Activated B cell treated with CpG ODN at 0.5 μM for 24 hours (primary cell): ENCODE measurements at regions of chr16 and their contacts with region 1.

Region 1: GRCh38 chr16:67399181-67399733 is 6.0 kb upstream of the TPPP3 start:
- DNase-seq: peak; percentile 55
- ATAC-seq: peak; percentile 82
- H3K4me3 Mint-ChIP-seq: no peak overlapping the region
- H3K27ac Mint-ChIP-seq: no peak overlapping the region
- H3K4me1 Mint-ChIP-seq: peaks cover 1% of the 10 kb centered on the region
- H3K27me3 Mint-ChIP-seq: peaks cover 9% of the 10 kb centered on the region
- CTCF ChIP-seq: peak; percentile 40

Region 2: GRCh38 chr16:67260426-67261075 is 138.7 kb before region 1 on chr16:
- CTCF ChIA-PET with region 1: interaction called, 8 read pairs
- POLR2A ChIA-PET with region 1: no interaction called
- intact Hi-C with region 1: loop called (anchors 1 kb)
- DNase-seq: no peak
- ATAC-seq: peak; percentile 45
- H3K4me3 Mint-ChIP-seq: no peak overlapping the region
- H3K27ac Mint-ChIP-seq: no peak overlapping the region
- H3K4me1 Mint-ChIP-seq: no peaks in the 10 kb centered on the region
- H3K27me3 Mint-ChIP-seq: peaks cover 5% of the 10 kb centered on the region
- CTCF ChIP-seq: no peak

Region 3: GRCh38 chr16:67279296-67280089 is 119.8 kb before region 1 on chr16 and contains the start of gene PLEKHG4:
- CTCF ChIA-PET with region 1: interaction called, 4 read pairs
- POLR2A ChIA-PET with region 1: no interaction called
- intact Hi-C with region 1: loop called (anchors 1 kb)
- DNase-seq: peak; percentile 73
- ATAC-seq: peak; percentile 97
- H3K4me3 Mint-ChIP-seq: peak within 1 kb of the TSS; percentile 79
- H3K27ac Mint-ChIP-seq: no peak within 1 kb of the TSS
- H3K4me1 Mint-ChIP-seq: peaks cover 3% of the 10 kb centered on the region
- H3K27me3 Mint-ChIP-seq: no peaks in the 10 kb centered on the region
- CTCF ChIP-seq: peak; percentile 41
- total RNA-seq, gene PLEKHG4: 7.8 TPM in 2 replicates

Region 4: GRCh38 chr16:67294938-67295361 is 104.3 kb before region 1 on chr16:
- CTCF ChIA-PET with region 1: no interaction called
- POLR2A ChIA-PET with region 1: no interaction called
- intact Hi-C with region 1: no loop called
- DNase-seq: no peak
- ATAC-seq: no peak
- H3K4me3 Mint-ChIP-seq: no peak overlapping the region
- H3K27ac Mint-ChIP-seq: no peak overlapping the region
- H3K4me1 Mint-ChIP-seq: no peaks in the 10 kb centered on the region
- H3K27me3 Mint-ChIP-seq: peaks cover 4% of the 10 kb centered on the region
- CTCF ChIP-seq: no peak

Region 5: DNA sequence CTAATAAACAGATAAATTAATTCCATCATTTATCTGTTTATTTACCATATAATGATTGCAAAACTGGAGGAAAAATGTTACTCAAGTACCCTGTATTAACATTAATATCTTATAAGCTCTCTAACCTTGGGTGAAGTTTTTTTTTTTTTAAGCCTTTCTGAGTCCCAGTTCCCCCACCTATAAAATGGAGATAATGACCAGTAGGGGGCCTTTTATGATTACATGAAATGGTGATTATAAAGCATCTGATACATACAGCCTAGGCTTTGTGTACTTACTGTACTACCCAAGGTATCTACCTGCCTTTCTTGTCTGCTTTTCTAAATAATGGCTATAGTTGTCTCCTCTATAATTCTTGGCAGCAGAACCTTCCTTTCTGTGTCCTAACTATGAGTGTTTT is 50.1 kb before region 1 on chr16:
- CTCF ChIA-PET with region 1: interaction called, 7 read pairs
- POLR2A ChIA-PET with region 1: no interaction called
- intact Hi-C with region 1: loop called (anchors 1 kb)
- DNase-seq: no peak
- ATAC-seq: peak; percentile 45
- H3K4me3 Mint-ChIP-seq: no peak overlapping the region
- H3K27ac Mint-ChIP-seq: no peak overlapping the region
- H3K4me1 Mint-ChIP-seq: no peaks in the 10 kb centered on the region
- H3K27me3 Mint-ChIP-seq: peaks cover 9% of the 10 kb centered on the region
- CTCF ChIP-seq: peak; percentile 52

Region 6: GRCh38 chr16:67415872-67416793 is 16.9 kb after region 1 on chr16 and contains the start of gene ZDHHC1:
- CTCF ChIA-PET with region 1: no interaction called
- POLR2A ChIA-PET with region 1: no interaction called
- intact Hi-C with region 1: no loop called
- DNase-seq: peak; percentile 73
- ATAC-seq: peak; percentile 97
- H3K4me3 Mint-ChIP-seq: peak within 1 kb of the TSS; percentile 85
- H3K27ac Mint-ChIP-seq: peak within 1 kb of the TSS; percentile 59
- H3K4me1 Mint-ChIP-seq: peaks cover 8% of the 10 kb centered on the region
- H3K27me3 Mint-ChIP-seq: peaks cover 10% of the 10 kb centered on the region
- CTCF ChIP-seq: no peak
- total RNA-seq, gene ZDHHC1: 2.8 and 3.8 TPM in 2 replicates